ENCODE measurements at regions of chr9 and their contacts with region 1.

Region 1: GRCh38 chr9:3240656-3241268 is 285.0 kb downstream of the RFX3 start:
- DNase-seq: peak; percentile 25
- H3K4me3 Mint-ChIP-seq: no peak overlapping the region
- H3K27ac Mint-ChIP-seq: no peak overlapping the region
- H3K4me1 Mint-ChIP-seq: no peaks in the 10 kb centered on the region
- H3K27me3 Mint-ChIP-seq: no peaks in the 10 kb centered on the region

Region 2: DNA sequence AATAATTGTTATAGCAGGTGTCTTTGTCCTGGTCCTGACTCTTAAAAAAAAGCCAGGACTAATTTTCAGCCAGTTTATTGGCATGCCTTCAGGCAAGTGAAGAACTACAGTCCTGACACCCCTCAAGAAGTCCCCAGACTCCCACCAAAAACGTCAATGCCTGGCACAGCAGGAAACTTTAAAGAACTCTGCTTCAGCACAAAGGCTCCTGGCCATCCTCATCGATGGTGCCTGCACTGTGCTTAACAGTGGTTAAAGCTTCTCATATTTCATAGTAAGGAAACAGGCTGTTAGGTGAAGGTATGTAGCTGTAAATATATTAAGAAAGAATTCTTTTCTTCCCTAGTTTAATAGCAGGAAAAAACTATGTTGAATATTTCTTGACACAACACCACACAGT is 116.8 kb before region 1 on chr9:
- intact Hi-C with region 1: no loop called
- DNase-seq: no peak
- H3K4me3 Mint-ChIP-seq: no peak overlapping the region
- H3K27ac Mint-ChIP-seq: no peak overlapping the region
- H3K4me1 Mint-ChIP-seq: no peaks in the 10 kb centered on the region
- H3K27me3 Mint-ChIP-seq: peaks cover 1% of the 10 kb centered on the region

Region 3: DNA sequence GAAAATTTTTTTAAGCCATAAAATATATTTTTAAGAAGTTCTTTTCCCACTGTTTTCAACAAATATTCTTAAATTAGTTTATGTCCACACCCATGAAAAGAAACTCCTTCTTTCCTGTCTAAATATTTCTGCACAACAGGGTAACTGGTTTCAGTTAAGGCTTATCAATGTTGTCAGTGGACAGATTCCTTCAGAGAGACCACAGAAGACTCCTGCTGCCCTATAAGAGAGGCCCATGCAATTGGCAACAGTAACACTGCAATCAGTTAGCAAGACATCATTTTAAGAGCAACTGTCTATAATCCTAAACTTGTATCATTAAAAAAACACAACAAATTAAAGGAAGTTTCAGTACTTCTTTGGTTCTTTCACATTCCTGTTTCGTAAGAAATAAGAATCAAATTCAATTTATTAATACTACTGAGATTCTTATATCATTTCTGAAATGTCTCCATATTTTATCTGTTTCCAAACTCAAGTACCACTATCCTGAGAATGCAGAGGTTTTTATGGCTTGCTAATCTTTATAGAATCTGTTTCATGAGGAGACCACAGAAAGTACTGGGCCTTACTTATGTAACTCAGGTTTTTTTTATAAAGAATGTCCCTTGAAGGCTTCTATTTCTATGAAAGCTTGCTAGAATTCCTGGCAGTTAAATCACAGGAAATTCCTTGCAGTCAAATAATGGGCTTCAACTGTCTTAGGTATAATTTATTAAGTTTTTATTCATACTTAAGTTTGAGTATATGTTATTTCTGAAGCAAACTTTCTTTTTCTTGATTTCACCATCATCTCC is 44.8 kb after region 1 on chr9:
- intact Hi-C with region 1: no loop called
- DNase-seq: no peak
- H3K4me3 Mint-ChIP-seq: no peak overlapping the region
- H3K27ac Mint-ChIP-seq: no peak overlapping the region
- H3K4me1 Mint-ChIP-seq: no peaks in the 10 kb centered on the region
- H3K27me3 Mint-ChIP-seq: no peaks in the 10 kb centered on the region

Region 4: DNA sequence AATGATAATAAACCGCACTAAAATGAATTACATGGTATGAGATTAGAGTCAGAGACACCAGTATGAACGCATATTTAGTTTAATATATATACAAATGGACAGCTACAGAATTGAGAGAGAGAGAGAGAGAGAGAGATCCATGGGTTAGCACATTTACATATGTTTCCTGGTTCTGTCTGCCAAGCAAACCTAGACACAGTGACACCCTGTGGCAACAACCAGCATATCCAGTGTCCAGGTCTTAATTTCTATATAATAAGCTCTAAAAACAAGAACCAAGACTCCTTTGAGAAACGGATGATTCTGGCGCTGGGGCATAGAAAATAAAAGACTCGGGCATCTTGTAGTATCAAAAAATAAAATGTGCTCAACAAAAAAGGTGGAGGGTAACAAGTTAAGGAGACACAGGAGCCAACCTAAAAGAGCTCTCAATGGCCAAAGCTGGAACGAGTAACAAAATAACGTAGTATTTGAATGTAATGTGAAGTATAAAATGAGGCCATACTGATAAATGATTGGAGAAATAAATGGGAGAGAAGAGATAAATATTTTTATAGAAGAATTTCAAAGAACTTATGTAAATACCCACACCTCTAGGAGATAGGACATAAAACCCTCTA is 200.5 kb after region 1 on chr9:
- intact Hi-C with region 1: loop called (anchors 1 kb)
- DNase-seq: peak; percentile 18
- H3K4me3 Mint-ChIP-seq: no peak overlapping the region
- H3K27ac Mint-ChIP-seq: no peak overlapping the region
- H3K4me1 Mint-ChIP-seq: no peaks in the 10 kb centered on the region
- H3K27me3 Mint-ChIP-seq: peaks cover 2% of the 10 kb centered on the region

Region 5: DNA sequence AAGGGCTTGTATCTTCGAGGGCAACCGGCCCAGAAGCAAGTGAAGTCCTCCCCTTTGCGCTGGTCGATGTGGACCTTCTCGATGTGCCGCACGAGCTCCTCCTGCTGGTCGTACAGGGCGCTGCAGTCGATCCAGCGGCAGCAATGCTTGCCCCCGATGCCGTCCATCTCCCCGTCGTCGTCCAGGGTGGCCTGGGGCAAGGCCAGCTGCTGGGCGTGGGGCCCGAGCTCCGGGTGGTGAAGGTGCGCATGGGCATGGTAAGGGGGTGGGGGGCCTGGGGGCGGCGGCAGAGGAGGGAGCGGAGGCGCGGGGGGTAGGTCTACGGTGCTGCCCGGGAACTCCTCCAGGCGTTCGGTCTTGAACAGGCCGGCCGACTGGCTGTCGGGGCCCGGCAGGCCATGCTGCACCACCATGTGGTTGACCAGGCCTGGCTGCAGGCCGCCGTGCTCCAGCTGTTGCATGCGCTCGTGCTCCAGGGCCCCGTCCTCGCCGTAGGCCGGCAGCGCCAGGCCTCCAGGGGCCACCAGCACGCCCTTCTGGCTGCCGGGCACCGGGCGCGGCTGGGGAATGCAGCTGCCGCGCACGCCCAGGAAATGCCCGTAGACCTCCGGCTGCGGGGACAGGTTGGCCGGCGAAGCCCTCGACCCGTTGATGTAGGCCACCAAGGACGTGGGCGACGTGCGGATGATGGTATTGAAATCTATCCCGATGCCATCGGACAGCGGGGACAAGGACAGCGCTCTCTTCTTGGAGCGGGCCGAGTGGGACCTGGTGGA is 877.3 kb after region 1 on chr9:
- intact Hi-C with region 1: loop called (anchors 5 kb)
- DNase-seq: peak; percentile 13
- H3K4me3 Mint-ChIP-seq: no peak overlapping the region
- H3K27ac Mint-ChIP-seq: no peak overlapping the region
- H3K4me1 Mint-ChIP-seq: no peaks in the 10 kb centered on the region
- H3K27me3 Mint-ChIP-seq: no peaks in the 10 kb centered on the region

Region 6: DNA sequence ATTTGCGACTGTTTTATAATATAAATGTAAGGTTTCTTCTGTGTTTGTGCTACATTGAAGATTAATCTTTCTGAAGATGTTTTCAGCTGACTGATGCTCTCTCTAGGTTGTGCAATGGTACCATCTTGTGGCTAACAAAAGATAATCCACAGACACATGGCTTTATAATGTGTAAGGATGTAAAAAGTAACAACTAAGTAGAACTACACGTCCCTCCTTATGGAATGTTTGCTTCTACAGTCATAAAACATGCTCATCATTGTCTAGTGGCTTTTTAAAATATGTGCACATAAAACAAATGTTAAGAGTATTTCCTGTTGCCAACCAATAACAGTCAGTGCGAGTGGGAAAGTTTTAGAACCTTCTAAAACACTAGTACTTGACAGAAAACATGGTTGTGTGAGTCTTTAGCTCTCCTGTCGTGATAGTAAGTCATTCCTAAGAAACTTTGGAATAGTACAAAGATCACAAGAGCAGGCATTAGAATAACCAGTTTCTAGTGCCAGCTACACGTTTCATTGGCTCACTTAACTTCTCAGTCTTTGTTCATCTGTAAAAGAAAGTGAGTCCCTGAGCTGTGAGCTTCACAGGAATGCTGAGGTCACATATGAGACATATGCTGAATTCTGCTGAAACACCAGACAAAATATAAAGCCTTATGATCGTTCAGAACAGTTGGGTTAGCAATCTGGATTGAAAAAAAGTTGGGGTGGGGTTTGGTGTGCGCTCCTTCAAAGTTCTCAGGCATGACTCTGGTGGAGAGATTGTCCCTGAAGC is 1134.8 kb after region 1 on chr9:
- intact Hi-C with region 1: loop called (anchors 1 kb)
- DNase-seq: no peak
- H3K4me3 Mint-ChIP-seq: no peak overlapping the region
- H3K27ac Mint-ChIP-seq: no peak overlapping the region
- H3K4me1 Mint-ChIP-seq: no peaks in the 10 kb centered on the region
- H3K27me3 Mint-ChIP-seq: peaks cover 7% of the 10 kb centered on the region

Measured in activated T-helper 1 cell treated with anti-CD3 and anti-CD28 coated beads, Interleukin-12 subunit alpha, Interleukin-12 subunit beta, Interleukin-2, Interleukin-4 antibody, amounts not matched to agents 30 ng/mL and 10 ng/mL and 1 ng/mL, durations not matched to agents 14 hours and 24 hours and 36 hours (primary cell).